IMR-90 (cell line): ENCODE measurements at regions of chr4 and their contacts with region 1.

Region 1: GRCh38 chr4:150242820-150243458 is 164.7 kb downstream of the DCLK2 start:
- DNase-seq: peak; percentile 60
- ATAC-seq: peak; percentile 66
- H3K4me3 ChIP-seq: no peak overlapping the region
- H3K27ac ChIP-seq: no peak overlapping the region; the same call in 1 of the 2 replicates
- H3K4me1 ChIP-seq: peaks cover 19% of the 10 kb centered on the region
- H3K27me3 ChIP-seq: no peaks in the 10 kb centered on the region
- CTCF ChIP-seq: peak; percentile 86
- POLR2A ChIP-seq: no peak
- RAD21 ChIP-seq: peak; percentile 86

Region 2: DNA sequence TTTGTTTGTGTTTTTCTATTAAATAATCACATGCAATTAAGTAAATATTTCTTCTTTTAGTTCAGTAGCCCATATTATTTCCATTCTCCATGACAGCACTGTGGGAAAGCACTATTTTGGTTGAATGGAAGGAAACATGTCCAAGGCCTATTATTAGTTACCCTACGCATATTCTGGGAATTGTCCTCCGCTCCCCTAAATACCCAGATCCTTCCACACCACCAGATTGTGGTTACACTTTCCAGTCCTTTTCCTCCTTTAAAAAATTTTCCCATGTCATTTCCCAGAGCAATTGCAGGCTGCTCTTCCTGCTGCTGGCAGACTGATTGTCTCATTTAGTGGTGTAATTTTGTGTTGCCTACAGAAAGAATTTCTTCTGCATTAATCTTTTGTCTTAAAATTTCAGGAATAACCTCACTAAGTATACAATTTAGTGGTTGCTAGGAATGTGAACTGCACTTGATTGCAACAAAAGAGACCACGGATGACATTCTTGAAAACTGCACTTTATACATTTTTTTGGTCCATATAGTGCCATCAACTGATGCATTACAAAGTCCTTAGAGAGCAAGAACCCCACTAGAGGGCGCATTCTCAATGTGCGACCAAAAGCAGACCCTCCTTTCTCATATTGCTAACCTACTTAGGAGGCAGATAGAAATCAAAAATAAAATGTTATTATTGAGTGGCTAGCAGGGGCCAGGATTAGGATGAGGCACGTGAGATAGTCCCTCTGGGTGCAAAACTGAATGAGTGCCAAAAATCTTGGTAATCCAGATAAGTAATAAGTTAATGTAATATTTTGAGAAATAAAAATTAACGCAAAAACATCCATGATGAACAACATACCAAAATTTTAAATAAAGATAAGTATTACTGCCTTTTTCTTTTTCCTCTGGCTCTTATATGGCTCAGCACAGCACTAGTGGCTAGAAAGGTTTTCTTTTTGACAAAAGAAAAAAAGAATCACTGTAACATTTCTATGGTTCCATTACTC is 328.5 kb before region 1 on chr4:
- CTCF ChIA-PET with region 1: no interaction called
- POLR2A ChIA-PET with region 1: no interaction called
- dilution Hi-C with region 1: no loop called
- in situ Hi-C with region 1: no loop called
- intact Hi-C with region 1: loop called (anchors 2 kb)
- DNase-seq: peak; percentile 68
- ATAC-seq: peak; percentile 79
- H3K4me3 ChIP-seq: no peak overlapping the region
- H3K27ac ChIP-seq: no peak overlapping the region
- H3K4me1 ChIP-seq: no peaks in the 10 kb centered on the region
- H3K27me3 ChIP-seq: no peaks in the 10 kb centered on the region
- CTCF ChIP-seq: peak; percentile 67
- POLR2A ChIP-seq: no peak
- RAD21 ChIP-seq: peak; percentile 55

Region 3: DNA sequence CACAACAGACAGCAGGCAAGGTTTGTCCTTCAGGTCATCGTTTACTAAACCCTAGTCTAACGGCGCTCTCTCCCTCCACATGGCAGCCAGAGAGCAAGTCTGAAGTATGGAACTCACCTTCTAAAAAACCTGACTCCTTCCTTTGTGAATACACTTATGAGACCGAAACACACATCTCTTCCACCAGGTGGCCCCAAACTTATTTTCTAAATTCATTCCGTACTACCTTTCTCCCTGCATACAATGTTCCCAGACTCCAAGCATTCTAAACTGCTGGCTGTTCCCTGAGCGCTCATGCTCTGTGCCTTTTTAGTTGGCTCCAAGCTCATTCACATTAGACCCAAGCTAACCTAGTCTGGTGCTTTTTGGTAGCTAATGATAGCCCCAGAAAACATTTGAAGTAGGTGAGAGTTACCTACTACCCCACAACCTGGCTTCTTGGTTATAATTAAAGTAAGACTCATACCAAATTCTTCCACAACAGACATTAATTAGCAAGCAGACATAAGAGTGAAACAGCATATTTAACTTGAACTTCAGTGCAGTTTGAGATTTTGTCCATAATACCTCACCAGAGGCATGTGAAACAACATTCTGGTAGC is 232.3 kb before region 1 on chr4:
- CTCF ChIA-PET with region 1: interaction called, 26 read pairs
- POLR2A ChIA-PET with region 1: no interaction called
- dilution Hi-C with region 1: no loop called
- in situ Hi-C with region 1: loop called (anchors 10 kb)
- intact Hi-C with region 1: no loop called
- DNase-seq: peak; percentile 72
- ATAC-seq: peak; percentile 77
- H3K4me3 ChIP-seq: no peak overlapping the region
- H3K27ac ChIP-seq: no peak overlapping the region
- H3K4me1 ChIP-seq: peaks cover 12% of the 10 kb centered on the region
- H3K27me3 ChIP-seq: no peaks in the 10 kb centered on the region
- CTCF ChIP-seq: peak; percentile 57
- POLR2A ChIP-seq: no peak
- RAD21 ChIP-seq: peak; percentile 66

Region 4: GRCh38 chr4:150078637-150079581 is 164.0 kb before region 1 on chr4:
- CTCF ChIA-PET with region 1: no interaction called
- POLR2A ChIA-PET with region 1: no interaction called
- dilution Hi-C with region 1: no loop called
- in situ Hi-C with region 1: no loop called
- intact Hi-C with region 1: loop called (anchors 2 kb)
- DNase-seq: peak; percentile 46
- ATAC-seq: peak; percentile 75
- H3K4me3 ChIP-seq: peak overlapping the region; percentile 78
- H3K27ac ChIP-seq: peak overlapping the region; percentile 69
- H3K4me1 ChIP-seq: no peaks in the 10 kb centered on the region
- H3K27me3 ChIP-seq: no peaks in the 10 kb centered on the region
- CTCF ChIP-seq: 0 out of 2 replicates have a peak, but pooled peaks have one; percentile 14
- POLR2A ChIP-seq: no peak
- RAD21 ChIP-seq: peak; percentile 9; the same call in 1 of the 2 replicates

Region 5: GRCh38 chr4:150217192-150217591 is 25.7 kb before region 1 on chr4:
- CTCF ChIA-PET with region 1: interaction called, 16 read pairs
- POLR2A ChIA-PET with region 1: no interaction called
- dilution Hi-C with region 1: no loop called
- in situ Hi-C with region 1: no loop called
- intact Hi-C with region 1: no loop called
- DNase-seq: peak; percentile 87
- ATAC-seq: peak; percentile 87
- H3K4me3 ChIP-seq: no peak overlapping the region
- H3K27ac ChIP-seq: peak overlapping the region; percentile 21; the same call in 1 of the 2 replicates
- H3K4me1 ChIP-seq: peaks cover 8% of the 10 kb centered on the region
- H3K27me3 ChIP-seq: no peaks in the 10 kb centered on the region
- CTCF ChIP-seq: peak; percentile 50
- POLR2A ChIP-seq: no peak
- RAD21 ChIP-seq: peak; percentile 64

Region 6: DNA sequence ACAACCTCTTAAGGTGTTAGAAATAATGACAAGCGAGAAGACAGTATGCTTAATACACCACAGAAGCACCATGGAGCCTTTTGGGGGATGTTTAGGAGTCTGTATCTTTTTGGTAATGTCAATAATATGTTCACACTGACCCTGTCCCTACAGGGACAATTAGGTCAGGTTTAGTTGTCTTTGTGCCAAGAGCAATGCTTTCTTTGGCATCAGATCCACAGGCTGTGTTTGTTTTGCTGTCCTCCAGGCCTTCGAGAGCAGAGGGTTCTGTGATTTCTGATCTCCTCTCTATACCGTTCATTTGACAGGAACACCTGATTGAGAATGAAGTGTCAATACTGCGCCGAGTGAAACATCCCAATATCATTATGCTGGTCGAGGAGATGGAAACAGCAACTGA is 10.9 kb before region 1 on chr4:
- CTCF ChIA-PET with region 1: interaction called, 11 read pairs
- POLR2A ChIA-PET with region 1: no interaction called
- dilution Hi-C with region 1: no loop called
- in situ Hi-C with region 1: no loop called
- intact Hi-C with region 1: no loop called
- DNase-seq: no peak
- ATAC-seq: no peak
- H3K4me3 ChIP-seq: no peak overlapping the region
- H3K27ac ChIP-seq: peak overlapping the region; percentile 53
- H3K4me1 ChIP-seq: peaks cover 42% of the 10 kb centered on the region
- H3K27me3 ChIP-seq: no peaks in the 10 kb centered on the region
- CTCF ChIP-seq: no peak
- POLR2A ChIP-seq: no peak
- RAD21 ChIP-seq: no peak

Region 7: DNA sequence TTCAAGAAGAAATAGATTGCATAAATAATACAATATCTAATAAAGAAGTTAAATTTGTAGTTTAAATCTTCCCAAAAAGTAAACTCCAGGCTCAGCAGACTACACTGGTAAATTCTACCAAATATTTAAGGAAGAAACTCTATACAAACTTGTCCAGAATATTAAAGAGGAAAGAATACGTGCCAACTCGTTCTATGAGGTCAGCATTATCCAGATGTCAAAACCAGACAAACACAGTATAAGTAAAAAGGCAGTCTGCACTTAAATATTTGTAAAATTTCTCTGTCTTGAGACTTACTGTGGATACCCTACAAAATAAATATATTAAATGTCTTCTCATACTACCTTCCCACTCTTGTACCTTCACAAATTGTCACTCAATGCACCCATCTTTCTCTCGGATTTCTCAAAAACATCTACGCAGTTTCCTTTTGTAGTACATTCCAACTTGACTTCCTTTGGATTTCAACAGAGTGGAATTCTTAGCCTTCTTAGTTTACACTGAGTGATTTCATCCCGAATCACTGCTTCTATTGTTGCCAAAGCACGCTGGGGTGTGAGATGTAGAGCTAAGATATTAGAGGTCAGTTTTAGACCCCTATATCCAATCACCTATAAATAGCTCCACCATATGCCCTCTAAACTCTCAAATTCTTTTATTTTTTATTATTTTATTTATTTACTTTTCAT is 267.4 kb after region 1 on chr4:
- CTCF ChIA-PET with region 1: no interaction called
- POLR2A ChIA-PET with region 1: no interaction called
- dilution Hi-C with region 1: no loop called
- in situ Hi-C with region 1: no loop called
- intact Hi-C with region 1: no loop called
- DNase-seq: peak; percentile 86
- ATAC-seq: peak; percentile 89
- H3K4me3 ChIP-seq: peak overlapping the region; percentile 30
- H3K27ac ChIP-seq: peak overlapping the region; percentile 99
- H3K4me1 ChIP-seq: peaks cover 5% of the 10 kb centered on the region
- H3K27me3 ChIP-seq: no peaks in the 10 kb centered on the region
- CTCF ChIP-seq: no peak
- POLR2A ChIP-seq: no peak
- RAD21 ChIP-seq: no peak

Region 8: DNA sequence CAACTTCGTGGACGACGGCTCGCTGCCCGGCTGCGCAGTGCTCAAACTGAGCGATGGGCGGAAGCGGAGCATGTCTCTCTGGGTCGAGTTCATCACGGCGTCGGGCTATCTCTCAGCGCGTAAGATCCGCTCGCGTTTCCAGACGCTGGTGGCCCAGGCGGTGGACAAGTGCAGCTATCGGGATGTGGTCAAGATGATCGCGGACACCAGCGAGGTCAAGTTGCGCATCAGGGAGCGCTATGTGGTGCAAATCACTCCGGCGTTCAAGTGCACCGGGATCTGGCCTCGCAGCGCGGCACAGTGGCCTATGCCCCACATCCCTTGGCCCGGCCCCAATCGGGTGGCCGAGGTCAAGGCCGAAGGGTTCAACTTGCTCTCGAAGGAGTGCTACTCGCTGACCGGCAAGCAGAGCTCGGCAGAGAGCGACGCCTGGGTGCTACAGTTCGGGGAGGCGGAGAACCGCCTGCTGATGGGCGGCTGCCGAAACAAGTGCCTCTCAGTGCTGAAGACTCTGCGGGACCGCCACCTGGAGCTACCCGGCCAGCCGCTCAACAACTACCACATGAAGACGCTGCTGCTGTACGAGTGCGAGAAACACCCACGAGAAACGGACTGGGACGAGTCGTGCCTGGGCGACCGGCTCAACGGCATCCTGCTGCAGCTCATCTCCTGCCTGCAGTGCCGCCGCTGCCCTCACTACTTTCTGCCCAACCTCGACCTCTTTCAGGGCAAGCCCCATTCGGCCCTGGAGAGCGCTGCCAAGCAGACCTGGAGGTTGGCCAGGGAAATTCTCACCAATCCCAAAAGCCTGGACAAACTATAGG is 340.6 kb after region 1 on chr4:
- CTCF ChIA-PET with region 1: no interaction called
- POLR2A ChIA-PET with region 1: no interaction called
- dilution Hi-C with region 1: no loop called
- in situ Hi-C with region 1: no loop called
- intact Hi-C with region 1: loop called (anchors 5 kb)
- DNase-seq: peak; percentile 47
- ATAC-seq: peak; percentile 40
- H3K4me3 ChIP-seq: peak overlapping the region; percentile 78
- H3K27ac ChIP-seq: peak overlapping the region; percentile 94
- H3K4me1 ChIP-seq: 0 out of 2 replicates have a peak, but pooled peaks cover 2% of the 10 kb centered on the region
- H3K27me3 ChIP-seq: no peaks in the 10 kb centered on the region
- CTCF ChIP-seq: no peak
- POLR2A ChIP-seq: no peak
- RAD21 ChIP-seq: no peak